ENCODE measurements at regions of chr10 and their contacts with region 1.

Region 1: DNA sequence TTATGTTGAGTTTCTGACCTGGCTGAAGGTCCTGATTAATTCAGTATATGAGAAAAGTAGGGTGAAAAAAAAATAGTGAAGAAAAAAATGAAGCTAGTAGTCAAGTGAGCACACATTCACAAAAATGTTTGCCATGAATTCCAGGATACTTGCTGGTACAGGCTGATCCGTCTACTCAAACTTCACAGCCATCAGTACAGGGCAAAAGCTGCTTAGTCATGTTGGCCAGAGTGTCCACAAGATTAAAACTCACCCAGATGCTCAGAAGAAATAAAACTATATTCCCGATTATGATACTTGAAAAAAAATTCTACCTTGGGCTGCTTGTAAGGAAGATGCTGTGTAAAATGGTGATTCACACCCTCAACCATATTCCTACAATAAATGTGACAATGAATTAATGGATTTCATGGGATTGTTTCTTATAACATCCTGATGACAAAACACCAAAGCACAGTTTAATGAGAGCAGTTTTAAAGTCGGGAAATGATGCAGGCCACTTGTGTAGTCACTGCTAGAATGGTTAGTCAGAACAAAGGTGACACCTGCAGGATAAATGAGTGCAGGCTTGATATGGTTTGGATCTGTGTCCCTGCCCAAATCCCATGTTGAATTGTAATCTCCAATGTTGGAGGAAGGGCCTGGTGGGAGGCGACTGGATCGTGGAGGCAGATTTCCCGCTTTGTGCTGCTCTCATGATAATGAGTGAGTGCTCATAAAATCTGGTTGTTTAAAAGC is 49.2 kb upstream of the ANKRD1 start:
- DNase-seq: peak in 1 of 2 experiments; percentile 51
- H3K4me3 ChIP-seq: no peak overlapping the region
- H3K4me3 Mint-ChIP-seq: no peak overlapping the region
- H3K27ac Mint-ChIP-seq: peak overlapping the region; percentile 55
- H3K4me1 ChIP-seq: peaks cover 19% of the 10 kb centered on the region
- H3K4me1 Mint-ChIP-seq: peaks cover 9% of the 10 kb centered on the region
- H3K27me3 ChIP-seq: no peaks in the 10 kb centered on the region
- H3K27me3 Mint-ChIP-seq: no peaks in the 10 kb centered on the region
- CTCF ChIP-seq: peak; percentile 31 to 39

Region 2: DNA sequence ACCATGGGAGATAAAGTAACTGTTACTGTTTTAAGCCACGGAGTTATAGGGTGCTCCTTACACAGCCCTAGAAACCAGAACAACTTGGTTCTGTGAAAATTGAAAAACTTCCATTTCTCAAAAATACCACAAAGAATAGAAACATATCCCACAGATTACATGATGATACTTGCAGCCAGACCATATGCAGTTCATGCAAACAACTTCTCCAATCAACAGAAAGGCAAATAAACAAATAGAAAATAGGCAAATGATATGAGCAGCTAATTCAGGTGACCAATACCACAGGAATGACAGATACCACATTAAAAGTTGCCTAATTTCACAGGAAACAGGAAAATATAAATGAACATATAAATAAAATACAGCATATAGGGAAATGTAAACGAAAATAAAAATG is 409.8 kb before region 1 on chr10:
- CTCF ChIA-PET with region 1: no interaction called
- POLR2A ChIA-PET with region 1: no interaction called
- intact Hi-C with region 1: no loop called
- DNase-seq: no peak
- H3K4me3 ChIP-seq: no peak overlapping the region
- H3K4me3 Mint-ChIP-seq: no peak overlapping the region
- H3K27ac Mint-ChIP-seq: no peak overlapping the region
- H3K4me1 ChIP-seq: no peaks in the 10 kb centered on the region
- H3K4me1 Mint-ChIP-seq: no peaks in the 10 kb centered on the region
- H3K27me3 ChIP-seq: no peaks in the 10 kb centered on the region
- H3K27me3 Mint-ChIP-seq: no peaks in the 10 kb centered on the region
- CTCF ChIP-seq: no peak

Region 3: DNA sequence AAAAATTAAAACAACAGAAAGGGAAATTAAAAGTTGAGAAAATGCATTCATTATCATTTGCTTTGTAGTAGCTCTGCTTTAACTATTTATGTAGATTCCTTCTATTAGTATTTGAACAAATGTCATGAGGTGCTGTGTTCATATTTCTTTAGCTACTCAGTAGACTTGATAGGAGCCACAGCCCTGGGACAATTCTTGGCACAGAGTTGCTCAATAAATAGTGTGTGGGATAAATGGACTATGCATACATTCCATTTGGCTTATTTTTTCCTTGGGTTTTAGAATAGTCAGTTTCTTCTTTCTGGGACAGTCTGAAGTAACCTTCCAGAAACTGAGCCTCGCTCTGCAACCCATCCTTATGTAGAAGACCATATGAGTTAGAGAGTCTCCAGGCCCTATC is 84.9 kb before region 1 on chr10:
- CTCF ChIA-PET with region 1: no interaction called
- POLR2A ChIA-PET with region 1: no interaction called
- intact Hi-C with region 1: loop called (anchors 1 kb)
- DNase-seq: no peak
- H3K4me3 ChIP-seq: no peak overlapping the region
- H3K4me3 Mint-ChIP-seq: no peak overlapping the region
- H3K27ac Mint-ChIP-seq: no peak overlapping the region
- H3K4me1 ChIP-seq: no peaks in the 10 kb centered on the region
- H3K4me1 Mint-ChIP-seq: no peaks in the 10 kb centered on the region
- H3K27me3 ChIP-seq: no peaks in the 10 kb centered on the region
- H3K27me3 Mint-ChIP-seq: no peaks in the 10 kb centered on the region
- CTCF ChIP-seq: no peak

Region 4: GRCh38 chr10:90912174-90912573 is 57.9 kb before region 1 on chr10:
- CTCF ChIA-PET with region 1: interaction called, 24 read pairs
- POLR2A ChIA-PET with region 1: interaction called, 15 read pairs
- intact Hi-C with region 1: loop called (anchors 1 kb)
- DNase-seq: no peak
- H3K4me3 ChIP-seq: no peak overlapping the region
- H3K4me3 Mint-ChIP-seq: peak overlapping the region; percentile 8
- H3K27ac Mint-ChIP-seq: peak overlapping the region; percentile 55
- H3K4me1 ChIP-seq: peaks cover 13% of the 10 kb centered on the region
- H3K4me1 Mint-ChIP-seq: peaks cover 35% of the 10 kb centered on the region
- H3K27me3 ChIP-seq: no peaks in the 10 kb centered on the region
- H3K27me3 Mint-ChIP-seq: no peaks in the 10 kb centered on the region
- CTCF ChIP-seq: no peak

Region 5: DNA sequence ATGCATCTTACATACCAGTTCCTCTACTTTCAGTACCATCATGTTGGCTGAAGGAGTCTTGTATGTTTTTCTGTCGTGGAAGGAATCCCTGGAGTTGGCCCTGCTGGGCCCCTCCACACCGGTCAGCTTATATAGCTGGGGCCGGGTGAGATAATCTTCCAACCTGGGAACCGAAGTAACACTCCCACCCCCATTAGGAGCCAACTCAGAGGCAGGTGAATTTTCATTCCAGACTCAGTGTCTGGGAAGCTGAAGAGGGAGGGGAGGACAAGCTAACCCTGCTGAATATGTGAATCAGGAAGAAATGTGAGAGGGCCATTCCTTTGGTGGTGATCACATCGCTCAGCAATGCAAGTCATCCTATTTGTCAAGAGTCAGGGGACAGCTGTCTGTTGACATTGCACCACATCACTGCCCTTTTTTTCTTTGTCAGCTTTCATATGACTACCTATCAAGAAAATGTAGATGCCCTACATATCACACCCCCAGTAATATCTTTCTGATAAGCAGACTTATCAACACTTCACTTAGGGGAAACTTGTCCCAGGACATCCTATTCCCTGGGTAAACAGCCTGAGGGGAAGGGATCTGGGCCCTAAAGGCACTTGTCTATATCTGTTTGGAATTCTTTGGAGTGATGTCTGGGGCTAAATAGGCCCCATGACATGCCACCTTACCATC is 49.0 kb before region 1 on chr10 and contains the start of gene ANKRD1:
- CTCF ChIA-PET with region 1: interaction called, 3 read pairs
- POLR2A ChIA-PET with region 1: interaction called, 5 read pairs
- intact Hi-C with region 1: loop called (anchors 2 kb)
- DNase-seq: peak; percentile 91 to 96
- H3K4me3 ChIP-seq: peak within 1 kb of the TSS; percentile 21
- H3K4me3 Mint-ChIP-seq: peak within 1 kb of the TSS; percentile 95
- H3K27ac Mint-ChIP-seq: peak within 1 kb of the TSS; percentile 96
- H3K4me1 ChIP-seq: peaks cover 24% of the 10 kb centered on the region
- H3K4me1 Mint-ChIP-seq: peaks cover 29% of the 10 kb centered on the region
- H3K27me3 ChIP-seq: no peaks in the 10 kb centered on the region
- H3K27me3 Mint-ChIP-seq: no peaks in the 10 kb centered on the region
- CTCF ChIP-seq: no peak
- total RNA-seq, gene ANKRD1: 75.7 and 97.4 TPM in 2 replicates

Region 6: GRCh38 chr10:90930070-90930837 is 39.9 kb before region 1 on chr10:
- CTCF ChIA-PET with region 1: no interaction called
- POLR2A ChIA-PET with region 1: interaction called, 5 read pairs
- intact Hi-C with region 1: loop called (anchors 1 kb)
- DNase-seq: peak; percentile 80 to 89
- H3K4me3 ChIP-seq: no peak overlapping the region
- H3K4me3 Mint-ChIP-seq: peak overlapping the region; percentile 54
- H3K27ac Mint-ChIP-seq: peak overlapping the region; percentile 89
- H3K4me1 ChIP-seq: peaks cover 69% of the 10 kb centered on the region
- H3K4me1 Mint-ChIP-seq: peaks cover 53% of the 10 kb centered on the region
- H3K27me3 ChIP-seq: no peaks in the 10 kb centered on the region
- H3K27me3 Mint-ChIP-seq: no peaks in the 10 kb centered on the region
- CTCF ChIP-seq: no peak

Region 7: GRCh38 chr10:90947030-90947940 is 22.8 kb before region 1 on chr10:
- CTCF ChIA-PET with region 1: no interaction called
- POLR2A ChIA-PET with region 1: no interaction called
- intact Hi-C with region 1: no loop called
- DNase-seq: peak in 1 of 2 experiments; percentile 21
- H3K4me3 ChIP-seq: no peak overlapping the region
- H3K4me3 Mint-ChIP-seq: no peak overlapping the region
- H3K27ac Mint-ChIP-seq: no peak overlapping the region
- H3K4me1 ChIP-seq: peaks cover 14% of the 10 kb centered on the region
- H3K4me1 Mint-ChIP-seq: peaks cover 8% of the 10 kb centered on the region
- H3K27me3 ChIP-seq: no peaks in the 10 kb centered on the region
- H3K27me3 Mint-ChIP-seq: no peaks in the 10 kb centered on the region
- CTCF ChIP-seq: no peak

Measured in Caco-2 (cell line).